CD4-positive, alpha-beta T cell (primary cell): ENCODE measurements at regions of chr4 and their contacts with region 1.

Region 1: DNA sequence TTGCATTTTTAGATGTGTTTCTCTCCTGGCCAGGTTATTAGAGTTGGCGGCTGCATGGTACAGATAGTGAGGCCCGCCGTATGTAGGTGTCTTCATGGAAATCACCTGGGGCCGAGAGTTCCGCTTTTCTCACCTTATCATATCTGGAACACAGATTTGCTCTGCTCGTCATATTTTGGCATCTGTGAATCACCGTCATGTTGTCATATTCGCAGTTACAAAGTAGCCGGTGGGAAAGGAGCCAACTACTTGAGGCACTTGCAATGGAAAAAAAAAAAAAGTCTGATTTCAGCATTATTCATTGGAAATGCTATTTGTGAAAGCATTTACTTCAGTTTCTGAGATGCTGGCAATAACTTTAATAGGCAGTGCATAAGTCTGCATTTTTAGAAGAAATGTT is 1715.2 kb upstream of the TENM3 start:
- DNase-seq: no peak
- ATAC-seq: no peak
- H3K4me3 ChIP-seq: no peak overlapping the region
- H3K4me3 Mint-ChIP-seq: no peak overlapping the region
- H3K27ac ChIP-seq: no peak overlapping the region
- H3K27ac Mint-ChIP-seq: no peak overlapping the region
- H3K4me1 ChIP-seq: no peaks in the 10 kb centered on the region
- H3K4me1 Mint-ChIP-seq: no peaks in the 10 kb centered on the region
- H3K27me3 ChIP-seq: no peaks in the 10 kb centered on the region
- H3K27me3 Mint-ChIP-seq: no peaks in the 10 kb centered on the region
- CTCF ChIP-seq: no peak

Region 2: GRCh38 chr4:180333162-180333561 is 194.8 kb before region 1 on chr4:
- CTCF ChIA-PET with region 1: no interaction called
- POLR2A ChIA-PET with region 1: no interaction called
- intact Hi-C with region 1: loop called in 1 of 2 experiments (anchors 5 kb)
- DNase-seq: no peak
- ATAC-seq: no peak
- H3K4me3 ChIP-seq: no peak overlapping the region
- H3K4me3 Mint-ChIP-seq: no peak overlapping the region
- H3K27ac ChIP-seq: no peak overlapping the region
- H3K27ac Mint-ChIP-seq: no peak overlapping the region
- H3K4me1 ChIP-seq: no peaks in the 10 kb centered on the region
- H3K4me1 Mint-ChIP-seq: no peaks in the 10 kb centered on the region
- H3K27me3 ChIP-seq: no peaks in the 10 kb centered on the region
- H3K27me3 Mint-ChIP-seq: no peaks in the 10 kb centered on the region
- CTCF ChIP-seq: no peak

Region 3: GRCh38 chr4:180512801-180513475 is 15.1 kb before region 1 on chr4:
- CTCF ChIA-PET with region 1: no interaction called
- POLR2A ChIA-PET with region 1: no interaction called
- intact Hi-C with region 1: no loop called
- DNase-seq: no peak
- ATAC-seq: no peak
- H3K4me3 ChIP-seq: no peak overlapping the region
- H3K4me3 Mint-ChIP-seq: no peak overlapping the region
- H3K27ac ChIP-seq: no peak overlapping the region
- H3K27ac Mint-ChIP-seq: no peak overlapping the region
- H3K4me1 ChIP-seq: no peaks in the 10 kb centered on the region
- H3K4me1 Mint-ChIP-seq: no peaks in the 10 kb centered on the region
- H3K27me3 ChIP-seq: no peaks in the 10 kb centered on the region
- H3K27me3 Mint-ChIP-seq: no peaks in the 10 kb centered on the region
- CTCF ChIP-seq: no peak

Region 4: DNA sequence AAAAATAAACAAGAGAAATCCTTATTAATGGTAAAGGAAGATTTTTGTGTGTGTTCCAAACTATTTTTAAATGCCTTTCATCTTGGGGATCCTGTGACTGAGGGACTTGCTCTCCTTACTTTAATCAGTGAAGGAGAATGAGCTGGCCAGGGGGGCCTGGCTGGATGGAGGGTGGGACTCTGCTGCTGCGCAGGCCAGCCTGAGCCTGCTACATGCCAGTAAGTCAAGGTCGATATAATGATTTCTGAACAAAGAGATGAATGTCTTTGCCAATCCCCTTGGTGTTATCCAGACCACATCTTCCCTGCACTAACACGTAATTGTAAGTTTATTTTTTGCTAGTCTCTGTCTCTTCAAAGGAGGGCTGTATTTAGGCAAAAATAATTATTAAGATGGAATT is 36.0 kb after region 1 on chr4:
- CTCF ChIA-PET with region 1: no interaction called
- POLR2A ChIA-PET with region 1: no interaction called
- intact Hi-C with region 1: no loop called
- DNase-seq: no peak
- ATAC-seq: no peak
- H3K4me3 ChIP-seq: no peak overlapping the region
- H3K4me3 Mint-ChIP-seq: no peak overlapping the region
- H3K27ac ChIP-seq: no peak overlapping the region
- H3K27ac Mint-ChIP-seq: no peak overlapping the region
- H3K4me1 ChIP-seq: no peaks in the 10 kb centered on the region
- H3K4me1 Mint-ChIP-seq: no peaks in the 10 kb centered on the region
- H3K27me3 ChIP-seq: no peaks in the 10 kb centered on the region
- H3K27me3 Mint-ChIP-seq: no peaks in the 10 kb centered on the region
- CTCF ChIP-seq: no peak